ENCODE measurements at regions of chr6 and their contacts with region 1.

Region 1: GRCh38 chr6:63764318-63764916 is 128.8 kb downstream of the PHF3 start:
- DNase-seq: no peak
- ATAC-seq: no peak

Region 2: GRCh38 chr6:63307581-63308246 is 456.7 kb before region 1 on chr6:
- intact Hi-C with region 1: loop called (anchors 5 kb)
- DNase-seq: no peak
- ATAC-seq: no peak

Region 3: DNA sequence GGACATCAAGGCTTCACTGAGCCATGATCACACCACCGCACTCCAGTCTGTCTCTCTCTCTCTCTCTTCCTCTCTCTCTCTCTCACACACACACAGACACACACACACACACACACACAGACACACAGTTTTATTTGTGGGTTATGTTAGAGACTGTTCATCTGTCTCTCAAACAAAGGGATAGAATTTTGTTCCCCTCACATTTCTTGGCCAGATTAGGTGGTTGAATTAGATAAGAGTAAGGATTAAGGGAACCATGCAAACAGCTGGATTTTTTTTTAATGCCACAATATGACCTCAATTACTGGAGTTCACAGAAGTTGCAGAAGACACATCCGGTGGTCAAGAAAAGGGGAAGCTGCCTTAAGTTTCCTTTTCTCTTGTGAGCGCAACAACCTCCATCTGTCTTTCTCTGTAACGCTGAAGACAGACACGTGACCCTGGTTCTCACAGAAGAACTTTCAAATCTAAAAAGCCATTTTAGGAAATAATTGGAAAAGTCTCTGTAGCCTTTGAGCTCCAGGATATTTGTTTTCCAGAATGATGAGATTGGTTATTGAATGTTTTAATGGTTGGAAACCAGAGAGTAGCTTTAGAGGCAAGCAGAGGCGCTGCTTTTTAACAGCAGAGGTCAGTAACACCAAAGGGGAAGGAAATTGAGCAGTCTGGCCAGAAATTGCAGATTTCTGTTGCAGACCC is 411.7 kb before region 1 on chr6:
- intact Hi-C with region 1: loop called (anchors 2 kb)
- DNase-seq: no peak
- ATAC-seq: peak; percentile 73

Region 4: GRCh38 chr6:63685446-63686379 is 78.7 kb before region 1 on chr6:
- intact Hi-C with region 1: no loop called
- DNase-seq: no peak
- ATAC-seq: no peak